Head of caudate nucleus (tissue), 42 donors: ENCODE measurements at regions of chr10 and their contacts with region 1.

Region 1: GRCh38 chr10:96395931-96396877 is 37.4 kb upstream of the OPALIN start:
- DNase-seq: peak; percentile 54 to 91 (median 80)

Region 2: DNA sequence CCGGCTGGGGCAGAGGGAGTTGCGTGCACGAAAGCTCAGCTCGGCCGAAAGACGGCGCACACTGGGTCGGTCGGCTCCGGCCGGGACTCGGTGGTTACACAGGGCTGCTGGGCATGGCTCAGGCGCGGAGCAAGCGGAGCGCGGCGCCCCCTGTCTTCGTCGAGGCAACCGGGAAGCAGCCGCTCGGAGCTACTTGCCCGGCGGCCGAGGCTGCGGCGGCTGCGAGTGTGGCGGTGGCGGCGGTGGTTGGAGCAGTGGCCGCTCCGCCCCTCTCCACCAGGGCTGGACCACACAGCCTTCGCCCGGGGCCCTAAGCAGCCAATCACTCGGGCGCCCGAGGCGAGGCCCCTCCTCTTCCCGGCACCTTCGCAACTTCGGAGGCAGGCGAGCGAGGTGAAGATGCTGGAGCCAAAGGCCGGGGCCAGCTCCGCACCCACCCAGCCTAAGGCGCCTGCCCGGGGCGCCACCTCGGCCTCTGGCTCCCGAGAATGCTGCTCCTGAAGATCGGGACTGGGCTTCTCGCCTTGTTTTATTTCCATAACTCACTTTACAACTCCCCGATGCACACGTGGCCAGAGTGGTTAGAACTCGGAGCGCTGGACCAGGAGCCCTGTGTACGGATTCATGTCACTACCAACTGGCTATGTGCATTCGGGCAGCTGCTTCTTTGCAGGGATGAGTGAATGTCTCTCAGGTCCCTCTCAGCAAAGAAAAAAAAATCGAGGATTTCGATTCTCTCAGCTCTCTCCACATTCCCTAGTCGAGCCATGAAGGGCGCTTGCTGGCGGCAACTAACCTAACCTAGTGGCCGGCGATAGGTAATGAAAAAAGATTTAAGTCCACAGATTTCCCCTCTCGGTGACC is 117.7 kb after region 1 on chr10 and contains the start of gene TLL2:
- intact Hi-C with region 1: loop called (anchors 5 kb)
- DNase-seq: peak; percentile 76 to 96 (median 90)

Region 3: DNA sequence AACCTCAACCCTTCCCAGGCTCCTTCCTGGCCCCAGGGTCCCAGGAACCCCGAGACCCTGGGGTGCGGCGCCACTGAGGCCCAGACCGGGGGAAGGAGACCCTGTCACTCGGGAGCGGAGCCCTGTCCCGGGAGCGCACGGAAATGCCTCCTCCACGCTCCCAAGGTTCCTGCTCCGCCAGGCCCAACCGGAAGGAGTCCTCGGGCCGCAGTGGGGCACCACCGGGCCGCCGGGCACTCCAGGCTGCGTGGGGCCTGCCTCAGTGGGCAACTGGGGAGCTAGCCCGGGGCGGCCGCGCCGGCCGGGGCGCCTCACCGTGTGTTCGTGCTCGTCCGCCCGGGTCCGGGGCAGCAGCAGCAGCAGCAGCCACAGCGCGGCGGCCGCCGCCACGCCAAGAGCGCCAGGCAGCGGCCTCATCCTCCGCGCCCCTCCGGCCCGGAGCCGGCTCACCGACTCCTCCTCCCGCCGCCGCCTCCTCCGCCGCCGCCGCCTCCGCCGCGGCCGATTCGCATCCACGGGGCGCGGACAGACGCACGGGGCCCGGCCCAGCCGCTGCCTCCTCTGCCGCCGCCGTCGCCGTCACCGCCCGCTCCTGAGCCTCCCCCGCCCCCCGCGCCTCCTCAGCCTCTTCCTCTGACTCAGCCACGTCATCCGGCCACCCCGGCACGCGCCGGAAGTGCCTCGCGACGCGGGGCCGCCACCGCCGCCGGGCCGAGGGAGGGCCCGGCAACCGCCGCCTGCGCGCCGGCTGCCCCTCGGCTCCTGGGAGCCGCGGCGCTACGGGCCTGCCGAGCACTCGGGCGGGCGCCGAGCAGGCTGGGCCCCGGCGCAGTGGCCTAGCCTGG is 190.4 kb after region 1 on chr10 and contains the start of gene TM9SF3:
- intact Hi-C with region 1: loop called (anchors 10 kb)
- DNase-seq: peak; percentile 72 to 97 (median 92)